Activated B cell treated with CpG ODN at 0.5 μM for 24 hours (primary cell): ENCODE measurements at regions of chr5 and their contacts with region 1.

Region 1: DNA sequence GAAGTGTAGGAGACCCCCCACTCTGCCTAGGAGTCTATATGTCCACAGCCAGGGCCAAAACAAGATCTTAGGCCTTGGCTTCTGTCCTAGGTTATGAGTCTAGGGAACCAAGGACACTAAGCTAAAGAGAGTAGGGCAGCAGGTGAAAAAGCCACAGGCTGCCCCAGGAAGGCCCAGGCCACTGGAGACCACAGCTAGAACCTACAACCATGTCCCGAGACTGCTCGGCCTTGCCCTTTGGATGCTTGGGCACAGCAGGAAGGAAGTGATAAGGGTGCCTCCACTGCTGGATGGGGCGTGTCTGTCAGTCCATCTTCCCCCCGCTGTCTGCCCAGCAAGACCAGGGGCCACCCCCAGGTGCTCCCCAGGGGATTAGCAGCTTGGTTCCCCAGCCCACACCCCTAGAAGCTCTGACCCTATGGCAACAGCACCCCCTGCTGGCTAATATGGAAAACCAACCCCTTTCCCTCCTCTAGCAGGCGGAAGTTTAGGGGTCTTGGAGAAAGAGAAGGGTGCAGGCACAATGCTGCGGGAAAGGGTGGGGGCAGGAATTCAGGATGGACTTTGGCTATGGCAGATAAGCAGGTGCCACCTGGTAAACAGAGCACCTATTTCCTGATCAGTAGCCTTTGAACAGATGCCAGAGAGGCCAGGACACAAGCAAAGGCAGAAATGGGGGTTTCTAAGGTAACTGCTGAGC is 10.5 kb upstream of the IRF1 start:
- DNase-seq: peak; percentile 75
- ATAC-seq: peak; percentile 55
- H3K4me3 Mint-ChIP-seq: no peak overlapping the region
- H3K27ac Mint-ChIP-seq: peak overlapping the region; percentile 88
- H3K4me1 Mint-ChIP-seq: peaks cover 30% of the 10 kb centered on the region
- H3K27me3 Mint-ChIP-seq: no peaks in the 10 kb centered on the region
- CTCF ChIP-seq: peak; percentile 84

Region 2: GRCh38 chr5:132064738-132065331 is 436.2 kb before region 1 on chr5:
- CTCF ChIA-PET with region 1: no interaction called
- POLR2A ChIA-PET with region 1: no interaction called
- intact Hi-C with region 1: loop called (anchors 1 kb)
- DNase-seq: peak; percentile 64
- ATAC-seq: peak; percentile 86
- H3K4me3 Mint-ChIP-seq: no peak overlapping the region
- H3K27ac Mint-ChIP-seq: no peak overlapping the region
- H3K4me1 Mint-ChIP-seq: peaks cover 8% of the 10 kb centered on the region
- H3K27me3 Mint-ChIP-seq: no peaks in the 10 kb centered on the region
- CTCF ChIP-seq: peak; percentile 35

Region 3: DNA sequence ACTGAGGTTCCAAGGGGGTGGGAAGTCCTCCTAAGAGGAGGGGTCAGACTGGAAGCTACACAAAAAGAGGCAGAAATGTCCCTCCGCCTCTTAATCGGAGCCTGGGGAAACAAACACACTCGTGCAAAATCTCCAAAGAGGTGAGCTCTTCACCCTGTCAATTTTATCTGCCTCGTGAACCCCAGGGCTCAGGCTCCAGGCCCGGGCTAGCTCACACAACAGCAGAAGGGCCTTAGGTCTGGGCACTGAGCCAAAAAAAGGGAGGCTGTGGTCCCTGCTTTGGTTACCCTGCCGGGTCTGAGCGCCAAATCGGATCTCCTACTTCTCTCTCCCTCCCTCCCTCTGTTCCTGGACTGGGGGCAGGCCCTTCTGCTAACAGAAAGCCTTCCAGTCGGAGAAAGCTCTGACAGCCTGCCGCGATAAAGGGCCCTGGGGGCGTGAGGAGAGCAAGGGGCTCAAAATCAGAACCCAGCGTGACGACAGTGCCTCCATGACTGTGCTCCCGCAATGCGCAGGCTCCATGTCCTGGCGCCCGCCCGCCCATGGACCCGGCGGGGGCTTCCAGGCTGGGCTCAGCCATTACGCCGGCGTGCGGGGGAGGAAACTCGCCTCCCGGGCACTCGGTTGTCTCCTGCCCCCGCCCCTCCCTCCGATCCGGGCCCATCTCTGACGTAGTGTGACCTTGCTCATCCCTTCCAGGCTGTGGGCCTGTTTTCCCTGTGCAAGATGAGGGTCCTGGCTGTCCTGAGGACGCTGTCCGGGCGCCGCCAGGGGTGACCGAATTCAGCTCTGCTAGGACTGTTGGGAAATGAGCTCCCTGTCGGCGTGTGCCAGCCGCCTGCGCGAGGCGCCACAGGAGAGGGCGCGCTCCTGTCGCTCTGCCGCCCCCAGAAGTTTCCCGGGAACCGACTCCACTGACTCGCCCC is 207.8 kb before region 1 on chr5:
- CTCF ChIA-PET with region 1: interaction called, 5 read pairs
- POLR2A ChIA-PET with region 1: interaction called, 9 read pairs
- intact Hi-C with region 1: loop called (anchors 5 kb)
- DNase-seq: peak; percentile 56
- ATAC-seq: peak; percentile 43
- H3K4me3 Mint-ChIP-seq: peak overlapping the region; percentile 87
- H3K27ac Mint-ChIP-seq: peak overlapping the region; percentile 76
- H3K4me1 Mint-ChIP-seq: peaks cover 15% of the 10 kb centered on the region
- H3K27me3 Mint-ChIP-seq: peaks cover 34% of the 10 kb centered on the region
- CTCF ChIP-seq: no peak

Region 4: DNA sequence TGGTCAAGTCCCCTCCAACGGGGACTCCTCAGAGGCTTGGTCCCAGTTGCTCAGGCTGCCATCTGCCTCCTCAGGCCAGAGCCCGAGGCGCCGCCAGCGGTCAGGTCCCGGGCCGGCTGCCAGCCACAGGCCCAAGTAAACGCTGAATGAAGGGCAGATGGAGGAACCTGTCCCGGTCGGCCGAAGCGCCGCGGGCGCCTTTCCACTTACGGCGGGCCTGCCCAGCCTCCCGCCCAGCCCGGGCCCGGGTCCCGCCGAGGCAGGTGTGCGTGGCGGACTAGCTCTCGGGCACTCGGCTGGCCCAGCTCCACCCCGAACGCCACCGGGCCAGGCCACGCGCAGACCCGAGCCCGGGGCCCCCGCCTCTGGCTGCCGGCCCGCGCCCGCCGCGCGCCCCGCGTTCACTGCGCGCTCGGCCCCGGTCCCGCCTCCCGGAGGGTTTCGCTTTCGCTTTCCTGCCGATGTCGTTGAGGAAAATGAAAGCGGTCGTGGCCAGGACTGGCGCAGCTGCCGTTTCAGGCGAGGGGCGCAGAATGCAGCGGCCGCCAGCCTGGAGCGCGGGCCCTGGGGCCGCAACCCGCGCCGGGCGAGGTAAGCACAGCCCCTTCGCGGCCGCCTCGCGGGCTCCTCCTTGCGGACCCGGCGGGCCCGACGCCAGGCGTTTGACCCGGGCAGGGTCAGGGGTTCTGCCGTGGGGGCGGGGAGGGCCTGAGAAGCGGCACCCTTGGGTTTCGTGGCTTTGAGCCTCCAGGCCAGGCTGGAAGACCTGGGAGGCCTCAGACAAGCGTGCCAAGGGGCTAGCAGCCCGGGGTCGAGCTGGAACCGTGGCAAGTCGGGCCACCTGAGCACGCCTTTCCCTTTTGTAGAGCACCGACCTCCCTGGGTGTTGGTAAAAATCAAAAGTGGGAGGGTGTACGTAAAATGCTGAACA is 90.4 kb before region 1 on chr5:
- CTCF ChIA-PET with region 1: interaction called, 36 read pairs
- POLR2A ChIA-PET with region 1: interaction called, 140 read pairs
- intact Hi-C with region 1: loop called (anchors 1 kb)
- DNase-seq: peak; percentile 85
- ATAC-seq: peak; percentile 86
- H3K4me3 Mint-ChIP-seq: peak overlapping the region; percentile 94
- H3K27ac Mint-ChIP-seq: peak overlapping the region; percentile 99
- H3K4me1 Mint-ChIP-seq: peaks cover 75% of the 10 kb centered on the region
- H3K27me3 Mint-ChIP-seq: no peaks in the 10 kb centered on the region
- CTCF ChIP-seq: no peak

Region 5: DNA sequence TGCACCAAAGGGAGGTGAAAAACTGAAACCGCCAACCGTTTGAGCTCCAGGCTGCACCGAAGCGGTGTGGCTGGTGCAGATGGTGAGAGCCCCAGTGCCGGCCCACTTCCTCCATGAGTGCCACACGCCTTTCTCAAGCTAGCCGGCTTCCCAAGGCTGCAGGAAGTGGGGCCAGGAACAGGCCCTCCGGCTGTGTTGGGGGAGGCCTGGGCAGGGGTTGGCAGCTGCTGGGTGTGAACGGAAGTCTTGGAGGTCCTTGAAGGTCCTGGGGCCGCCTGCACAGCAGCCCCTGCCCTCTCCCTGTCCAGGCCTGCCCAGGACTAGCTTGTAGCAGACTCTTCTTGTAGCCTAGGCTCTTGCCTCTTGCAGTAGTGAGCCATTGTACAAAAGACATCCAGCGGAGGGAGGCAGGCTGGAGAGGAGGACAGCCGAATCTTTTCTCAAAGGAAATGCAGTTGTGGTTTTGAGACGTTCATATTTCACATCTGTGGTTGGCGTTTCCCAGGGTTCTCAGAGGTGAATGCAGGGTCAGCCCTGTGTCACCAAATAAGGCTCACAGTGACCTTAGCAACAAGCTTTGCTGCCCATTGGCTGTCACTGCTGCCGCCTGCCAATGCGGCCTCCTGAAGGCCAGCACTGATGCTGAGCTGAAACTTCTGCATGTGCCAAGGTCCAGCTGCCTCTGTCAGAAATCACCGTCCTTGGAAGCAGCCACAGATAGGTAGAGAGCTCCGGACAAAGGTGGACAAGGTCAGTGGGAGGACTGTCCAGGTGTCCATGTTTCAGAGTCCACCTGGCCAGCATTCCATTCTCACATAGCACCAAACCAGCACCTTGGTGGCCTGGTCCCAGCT is 34.4 kb before region 1 on chr5:
- CTCF ChIA-PET with region 1: interaction called, 5 read pairs
- POLR2A ChIA-PET with region 1: interaction called, 59 read pairs
- intact Hi-C with region 1: loop called (anchors 5 kb)
- DNase-seq: peak; percentile 44
- ATAC-seq: peak; percentile 64
- H3K4me3 Mint-ChIP-seq: peak overlapping the region; percentile 55
- H3K27ac Mint-ChIP-seq: peak overlapping the region; percentile 54
- H3K4me1 Mint-ChIP-seq: peaks cover 92% of the 10 kb centered on the region
- H3K27me3 Mint-ChIP-seq: no peaks in the 10 kb centered on the region
- CTCF ChIP-seq: no peak

Region 6: DNA sequence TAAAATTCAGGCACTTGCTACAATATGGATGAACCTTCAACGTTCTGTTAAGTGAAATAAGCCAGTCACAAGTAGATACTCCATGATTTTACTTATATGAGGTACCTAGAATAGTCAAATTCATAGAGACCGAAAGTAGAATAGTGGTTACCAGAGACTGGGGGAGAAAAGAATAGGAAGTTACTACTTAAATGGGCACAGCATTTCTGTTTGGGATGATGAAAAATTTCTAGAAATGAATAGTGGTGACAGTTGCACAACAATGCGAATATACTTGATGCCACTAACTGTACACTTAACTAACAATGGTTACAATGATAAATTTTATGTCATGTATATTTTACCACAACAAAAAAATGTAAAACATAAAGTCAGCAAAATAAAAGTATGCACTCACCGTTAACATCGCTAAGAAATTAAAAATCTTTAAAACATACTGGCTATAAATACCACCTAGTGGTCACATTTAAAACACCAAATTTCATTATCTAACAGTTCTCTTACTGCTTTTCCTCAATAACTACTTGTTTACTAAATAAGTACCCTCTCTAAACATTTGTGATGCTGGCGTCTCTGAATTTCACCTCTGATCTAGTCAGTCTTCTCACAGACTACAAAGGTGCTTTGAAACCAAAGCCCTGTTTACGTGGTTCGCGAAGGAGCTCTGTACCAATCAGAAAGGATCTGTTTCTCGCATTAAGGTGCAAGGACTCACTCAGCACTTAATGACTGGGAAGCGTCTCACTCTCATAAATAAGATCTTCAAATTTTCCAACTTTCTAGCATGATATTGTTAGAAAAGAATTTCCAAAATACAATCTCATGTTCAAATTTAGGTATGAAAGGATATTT is 213.6 kb after region 1 on chr5:
- CTCF ChIA-PET with region 1: interaction called, 5 read pairs
- POLR2A ChIA-PET with region 1: no interaction called
- intact Hi-C with region 1: loop called (anchors 1 kb)
- DNase-seq: no peak
- ATAC-seq: no peak
- H3K4me3 Mint-ChIP-seq: no peak overlapping the region
- H3K27ac Mint-ChIP-seq: no peak overlapping the region
- H3K4me1 Mint-ChIP-seq: no peaks in the 10 kb centered on the region
- H3K27me3 Mint-ChIP-seq: no peaks in the 10 kb centered on the region
- CTCF ChIP-seq: no peak

Region 7: GRCh38 chr5:132883261-132883834 is 382.3 kb after region 1 on chr5:
- CTCF ChIA-PET with region 1: interaction called, 6 read pairs
- POLR2A ChIA-PET with region 1: no interaction called
- intact Hi-C with region 1: loop called (anchors 2 kb)
- DNase-seq: no peak
- ATAC-seq: peak; percentile 72
- H3K4me3 Mint-ChIP-seq: no peak overlapping the region
- H3K27ac Mint-ChIP-seq: peak overlapping the region; percentile 53
- H3K4me1 Mint-ChIP-seq: peaks cover 12% of the 10 kb centered on the region
- H3K27me3 Mint-ChIP-seq: no peaks in the 10 kb centered on the region
- CTCF ChIP-seq: no peak

Region 8: DNA sequence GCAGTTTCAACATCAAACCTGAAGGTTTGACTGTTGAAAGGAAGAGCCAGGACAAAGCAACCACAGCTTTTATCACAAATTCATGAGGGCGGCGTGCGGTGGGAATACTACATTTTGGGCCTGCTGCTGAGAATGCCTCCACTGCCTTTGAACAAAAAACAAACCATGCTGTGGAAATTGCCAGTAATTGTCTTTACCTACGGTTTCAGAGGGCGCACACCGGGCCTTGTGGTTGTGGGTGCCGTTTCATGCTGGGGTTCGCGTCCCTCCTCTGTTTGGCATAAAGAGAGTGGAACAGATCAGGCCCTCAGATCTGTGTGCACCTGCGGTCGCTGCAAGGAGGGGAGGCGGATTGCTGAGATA is 1585.8 kb after region 1 on chr5:
- CTCF ChIA-PET with region 1: no interaction called
- POLR2A ChIA-PET with region 1: no interaction called
- intact Hi-C with region 1: no loop called
- DNase-seq: no peak
- ATAC-seq: no peak
- H3K4me3 Mint-ChIP-seq: no peak overlapping the region
- H3K27ac Mint-ChIP-seq: no peak overlapping the region
- H3K4me1 Mint-ChIP-seq: peaks cover 22% of the 10 kb centered on the region
- H3K27me3 Mint-ChIP-seq: peaks cover 2% of the 10 kb centered on the region
- CTCF ChIP-seq: no peak